ENCODE measurements at regions of chr7 and their contacts with region 1.

Region 1: DNA sequence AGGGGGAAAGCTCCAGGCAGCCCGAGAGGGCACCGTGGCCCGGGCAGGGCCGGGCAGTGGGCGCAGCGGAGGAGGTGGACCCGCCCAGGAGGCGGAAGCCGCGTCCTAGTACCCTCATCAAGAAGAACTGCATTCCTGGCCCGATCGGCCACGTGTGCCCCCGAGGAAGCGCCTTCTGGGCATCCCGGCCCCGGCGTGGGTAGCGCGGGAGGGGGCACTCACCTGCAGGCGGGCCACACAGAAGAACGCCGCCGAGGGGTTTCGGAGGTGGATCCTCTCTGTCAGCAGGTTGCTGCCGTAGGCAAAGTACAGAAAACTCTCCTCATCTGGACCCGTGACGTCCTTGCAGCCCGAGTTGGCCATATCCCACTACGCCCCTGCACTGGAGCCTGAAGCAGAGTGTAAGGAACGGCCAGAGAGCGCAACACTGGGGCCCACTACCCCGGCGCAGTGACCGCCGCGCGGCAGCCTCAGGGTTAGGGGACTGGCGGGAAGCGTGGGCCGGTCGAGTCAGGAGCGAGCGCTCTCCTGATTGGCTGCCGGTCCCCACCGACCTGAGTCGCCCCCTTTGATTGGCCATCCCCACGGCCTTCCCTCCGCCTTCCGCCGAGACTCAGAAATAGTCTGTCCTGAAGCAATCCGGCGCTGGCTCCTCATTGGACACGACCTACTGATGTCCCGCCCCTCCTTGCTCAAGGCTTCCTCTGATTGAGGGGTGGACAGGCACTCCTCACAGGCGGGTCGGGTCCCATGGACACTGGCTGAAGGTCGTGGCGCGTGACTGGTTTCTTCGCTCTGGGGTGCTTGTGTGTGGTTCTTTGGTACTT is at the start of gene GGCT:
- DNase-seq: peak; percentile 96
- H3K4me3 Mint-ChIP-seq: peak within 1 kb of the TSS; percentile 87
- H3K27ac Mint-ChIP-seq: peak within 1 kb of the TSS; percentile 89
- H3K4me1 Mint-ChIP-seq: peaks cover 53% of the 10 kb centered on the region
- H3K27me3 Mint-ChIP-seq: no peaks in the 10 kb centered on the region
- total RNA-seq, gene GGCT: 75.4 and 79.0 TPM in 2 replicates

Region 2: DNA sequence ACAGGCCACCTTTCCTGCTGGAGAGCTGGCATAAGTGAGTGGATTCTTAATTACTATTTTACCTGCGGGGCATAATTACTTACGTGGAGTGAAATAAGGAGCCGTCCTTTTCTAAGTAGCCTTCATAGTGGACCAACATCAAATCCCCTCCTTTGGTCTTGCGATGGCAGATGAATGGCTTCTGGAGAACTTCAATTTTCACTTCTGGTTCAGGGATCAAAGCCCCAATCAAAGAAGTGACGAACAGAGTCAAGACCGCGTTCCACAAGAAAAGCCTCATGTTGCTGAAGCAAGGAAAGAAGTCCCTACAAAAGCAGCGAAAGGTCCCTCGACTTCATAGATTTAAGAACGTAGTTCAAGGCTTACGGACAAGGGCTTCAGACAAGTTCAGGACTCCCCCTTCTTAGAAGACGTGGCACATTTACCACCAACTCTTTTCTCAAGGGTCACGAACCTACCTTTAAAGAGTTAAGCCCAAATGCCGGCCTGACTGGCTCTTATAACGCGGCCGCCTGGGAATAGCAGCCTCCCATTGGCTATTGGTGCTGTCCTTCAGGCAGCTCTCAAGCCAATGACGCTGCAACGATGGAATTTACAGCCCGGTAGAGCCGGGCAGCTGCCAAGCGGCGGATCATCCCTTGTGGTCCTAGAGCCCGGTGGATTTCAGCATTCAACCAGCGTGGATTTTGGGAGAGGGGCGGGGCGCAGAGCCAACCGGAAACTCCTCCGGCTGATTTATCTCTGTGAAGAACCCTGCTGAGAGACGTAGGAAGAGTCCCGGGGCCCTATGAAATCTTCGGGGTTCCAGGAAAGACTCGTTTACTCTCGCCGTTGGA is 478.1 kb before region 1 on chr7 and contains the start of gene FKBP14:
- intact Hi-C with region 1: loop called (anchors 1 kb)
- DNase-seq: peak; percentile 91
- H3K4me3 Mint-ChIP-seq: no peak within 1 kb of the TSS
- H3K27ac Mint-ChIP-seq: peak within 1 kb of the TSS; percentile 89
- H3K4me1 Mint-ChIP-seq: peaks cover 44% of the 10 kb centered on the region
- H3K27me3 Mint-ChIP-seq: no peaks in the 10 kb centered on the region
- total RNA-seq, gene FKBP14: 8.4 and 10.6 TPM in 2 replicates

Region 3: GRCh38 chr7:30225863-30226613 is 278.5 kb before region 1 on chr7:
- intact Hi-C with region 1: no loop called
- DNase-seq: no peak
- H3K4me3 Mint-ChIP-seq: no peak overlapping the region
- H3K27ac Mint-ChIP-seq: no peak overlapping the region
- H3K4me1 Mint-ChIP-seq: peaks cover 5% of the 10 kb centered on the region
- H3K27me3 Mint-ChIP-seq: peaks cover 9% of the 10 kb centered on the region

Region 4: GRCh38 chr7:30276203-30276900 is 228.2 kb before region 1 on chr7:
- intact Hi-C with region 1: loop called (anchors 2 kb)
- DNase-seq: peak; percentile 28
- H3K4me3 Mint-ChIP-seq: no peak overlapping the region
- H3K27ac Mint-ChIP-seq: no peak overlapping the region
- H3K4me1 Mint-ChIP-seq: peaks cover 8% of the 10 kb centered on the region
- H3K27me3 Mint-ChIP-seq: peaks cover 4% of the 10 kb centered on the region

Region 5: DNA sequence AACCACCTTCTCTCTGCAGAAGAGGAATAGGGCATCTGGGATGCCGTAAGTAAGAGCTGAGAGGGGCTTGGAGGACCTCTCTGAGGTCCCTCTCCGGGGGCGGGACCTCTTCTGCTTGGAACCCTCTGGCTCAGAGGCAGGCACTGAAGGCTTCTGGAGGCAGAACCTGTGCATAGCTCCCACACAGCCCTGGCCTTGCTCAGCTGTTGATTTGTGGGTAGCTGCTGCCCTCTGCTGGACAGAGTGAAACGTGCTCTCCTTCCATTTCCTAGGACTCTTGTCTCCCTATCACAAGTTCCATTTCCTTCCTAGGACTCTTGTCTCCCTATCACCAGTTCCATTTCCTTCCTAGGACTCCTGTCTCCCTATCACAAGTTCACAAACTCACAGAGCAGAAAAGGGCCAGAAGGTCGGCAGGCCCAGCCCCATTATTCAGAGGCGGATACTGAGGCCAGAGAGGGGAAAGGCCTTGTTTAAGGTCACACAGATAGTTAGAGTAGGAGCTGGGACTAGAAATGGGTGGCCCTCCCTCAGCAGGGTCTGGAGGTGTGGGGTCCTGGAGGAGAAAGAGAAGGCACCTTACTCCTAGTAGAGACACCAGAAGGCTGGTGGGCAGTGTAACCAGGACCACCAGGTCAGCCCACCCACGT is 59.8 kb after region 1 on chr7:
- intact Hi-C with region 1: loop called (anchors 1 kb)
- DNase-seq: peak; percentile 65
- H3K4me3 Mint-ChIP-seq: no peak overlapping the region
- H3K27ac Mint-ChIP-seq: peak overlapping the region; percentile 13
- H3K4me1 Mint-ChIP-seq: no peaks in the 10 kb centered on the region
- H3K27me3 Mint-ChIP-seq: no peaks in the 10 kb centered on the region

Region 6: GRCh38 chr7:32495298-32496176 is 1991.0 kb after region 1 on chr7 and contains the start of gene AVL9:
- intact Hi-C with region 1: loop called (anchors 10 kb)
- DNase-seq: peak; percentile 99
- H3K4me3 Mint-ChIP-seq: peak within 1 kb of the TSS; percentile 93
- H3K27ac Mint-ChIP-seq: peak within 1 kb of the TSS; percentile 98
- H3K4me1 Mint-ChIP-seq: peaks cover 32% of the 10 kb centered on the region
- H3K27me3 Mint-ChIP-seq: no peaks in the 10 kb centered on the region
- total RNA-seq, gene AVL9: 46.7 and 50.6 TPM in 2 replicates

Measured in activated T-helper 1 cell treated with anti-CD3 and anti-CD28 coated beads, Interleukin-12 subunit alpha, Interleukin-12 subunit beta, Interleukin-2, Interleukin-4 antibody, amounts not matched to agents 30 ng/mL and 10 ng/mL and 1 ng/mL, durations not matched to agents 14 hours and 24 hours and 36 hours (primary cell).